Gastrocnemius medialis (tissue), 4 donors: ENCODE measurements at regions of chr2 and their contacts with region 1.

Region 1: DNA sequence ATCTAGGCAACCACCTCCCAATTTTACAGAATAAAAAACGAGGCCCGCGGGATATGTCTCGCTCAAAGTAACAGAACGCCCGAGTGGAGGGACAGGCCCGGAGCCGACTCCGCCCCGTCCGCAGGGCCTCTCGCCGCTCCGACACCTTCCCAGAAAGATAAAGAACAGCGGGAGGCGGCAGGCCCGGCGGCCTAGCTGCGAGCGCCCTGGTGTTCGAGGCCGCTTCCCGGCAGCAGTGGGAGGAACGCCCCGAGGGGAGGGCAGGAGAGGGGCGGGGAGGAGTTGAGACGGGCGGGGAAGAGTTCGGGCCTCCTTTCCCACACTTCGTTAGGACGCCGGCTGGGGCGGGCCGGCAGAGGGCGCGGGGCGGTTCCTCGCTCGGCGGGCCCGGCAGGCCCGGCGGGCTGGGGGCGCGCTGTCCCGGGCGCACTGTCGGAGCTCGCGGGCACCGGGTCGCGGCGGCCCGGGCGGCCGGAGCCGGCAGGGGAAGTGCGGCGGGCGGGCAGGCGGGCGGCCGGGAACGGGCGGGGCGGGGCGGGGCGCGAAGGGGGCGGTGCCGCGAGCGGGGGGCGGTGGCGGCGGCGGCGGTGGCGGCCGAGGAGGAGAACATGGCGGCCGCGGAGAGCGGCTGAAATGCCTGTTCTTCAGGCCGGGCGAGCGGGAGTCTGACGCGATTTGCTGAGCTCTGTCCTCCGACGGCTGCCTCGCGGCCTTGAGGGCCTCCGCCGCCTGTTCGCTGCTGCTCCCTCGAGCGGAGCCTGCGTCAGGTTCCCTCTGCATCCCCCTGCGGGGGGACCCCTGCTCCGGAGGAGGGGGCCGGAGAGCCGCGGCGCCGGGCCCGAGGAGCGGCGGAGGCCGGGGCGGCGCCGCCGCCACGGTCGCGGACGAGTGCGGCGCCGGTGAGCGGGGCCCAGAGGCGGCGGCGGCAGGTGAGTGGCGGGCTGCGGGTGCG is at the start of gene NCOA1:
- DNase-seq: peak; percentile 79 to 81
- ATAC-seq: peak; percentile 78 to 79
- H3K4me3 ChIP-seq: peak within 1 kb of the TSS; percentile 71 to 87 (median 84)
- H3K27ac ChIP-seq: peak within 1 kb of the TSS; percentile 93 to 98 (median 97)
- H3K4me1 ChIP-seq: peaks cover 39 to 41% of the 10 kb centered on the region in 2 donors
- H3K27me3 ChIP-seq: no peaks in the 10 kb centered on the region
- CTCF ChIP-seq: peak; percentile 11 to 37 (median 28)
- POLR2A ChIP-seq: peak; percentile 60 to 68
- total RNA-seq, gene NCOA1: 33.9 to 91.2 (median 60.1) TPM

Region 2: GRCh38 chr2:24435391-24436316 is 55.3 kb before region 1 on chr2:
- in situ Hi-C with region 1: no loop called
- intact Hi-C with region 1: loop called (anchors 1 kb)
- DNase-seq: peak; percentile 91
- ATAC-seq: peak; percentile 91
- H3K4me3 ChIP-seq: peak overlapping the region; percentile 27 to 46 (median 34)
- H3K27ac ChIP-seq: peak overlapping the region; percentile 81 to 92 (median 91)
- H3K4me1 ChIP-seq: peaks cover 54% of the 10 kb centered on the region in 2 donors
- H3K27me3 ChIP-seq: no peaks in the 10 kb centered on the region
- CTCF ChIP-seq: no peak
- POLR2A ChIP-seq: no peak

Region 3: DNA sequence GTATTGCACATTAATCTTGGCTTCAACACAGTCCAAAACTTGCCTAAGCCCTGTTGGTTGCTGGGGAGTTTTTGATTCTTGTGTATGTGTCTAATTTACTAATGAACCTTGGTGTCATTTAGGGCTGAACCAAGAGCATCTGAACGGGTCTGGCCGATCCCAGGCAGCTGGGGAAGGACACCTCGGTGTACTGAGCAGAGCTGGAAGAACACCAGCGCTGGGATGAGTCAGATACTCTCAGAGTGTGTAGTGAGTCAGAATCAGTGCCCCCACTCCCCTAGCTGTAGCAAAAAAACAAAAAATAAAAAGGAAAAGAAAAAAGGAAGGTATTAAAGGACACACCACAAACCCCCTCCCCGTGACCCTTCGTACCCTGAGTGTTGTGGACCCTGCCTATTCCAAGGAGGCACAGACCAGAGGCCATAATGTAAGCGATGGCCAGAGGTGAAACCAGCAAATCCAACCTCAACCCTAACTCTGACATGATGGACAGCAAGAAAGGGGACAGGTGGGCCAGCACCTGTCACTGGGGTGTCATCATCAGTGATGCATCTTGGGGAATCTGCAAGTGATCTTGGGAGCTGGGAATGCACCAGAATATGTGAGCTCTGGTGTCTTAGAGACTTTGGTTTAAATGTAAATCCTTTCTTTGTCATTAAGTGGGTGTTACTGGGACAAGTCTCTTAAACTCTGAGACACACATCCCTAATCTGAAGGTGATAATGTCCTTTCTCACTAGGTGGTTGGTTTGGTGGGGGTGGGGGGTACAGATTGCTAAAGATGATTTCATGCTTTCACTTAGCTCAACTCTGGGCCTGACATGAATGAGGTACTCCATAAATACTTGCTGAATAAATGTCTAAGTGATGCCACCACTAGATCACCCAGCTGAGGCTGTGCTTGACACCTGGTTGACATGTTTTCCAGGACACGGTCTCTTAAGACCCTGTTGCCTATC is 34.1 kb before region 1 on chr2:
- in situ Hi-C with region 1: no loop called
- intact Hi-C with region 1: loop called (anchors 1 kb)
- DNase-seq: peak; percentile 88 to 92
- ATAC-seq: peak; percentile 97 to 98
- H3K4me3 ChIP-seq: no peak overlapping the region
- H3K27ac ChIP-seq: peak overlapping the region; percentile 63 to 88 (median 86)
- H3K4me1 ChIP-seq: peaks cover 28 to 43% of the 10 kb centered on the region in 2 donors
- H3K27me3 ChIP-seq: no peaks in the 10 kb centered on the region
- CTCF ChIP-seq: peak in 1 of 5 experiments; percentile 25
- POLR2A ChIP-seq: no peak

Region 4: DNA sequence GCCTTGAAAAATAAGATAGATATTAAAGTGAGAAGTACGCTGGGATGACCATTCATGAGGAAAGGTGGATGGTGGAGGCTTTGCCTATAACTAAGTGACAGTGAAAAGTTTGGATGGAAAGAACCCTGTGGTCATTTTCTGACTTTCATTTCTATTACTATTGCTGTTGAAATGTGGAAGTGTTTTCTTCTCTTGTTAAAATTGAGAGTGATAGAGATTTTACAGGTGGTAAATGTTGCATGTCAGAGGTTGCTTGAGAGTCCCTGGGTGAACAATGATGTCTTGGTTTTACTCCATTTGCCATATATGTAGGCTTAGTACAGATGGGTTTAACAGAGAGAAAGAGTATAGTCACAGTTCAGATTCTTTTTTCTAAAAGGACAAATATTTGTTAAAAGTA is 18.5 kb after region 1 on chr2:
- in situ Hi-C with region 1: no loop called
- intact Hi-C with region 1: no loop called
- DNase-seq: no peak
- ATAC-seq: no peak
- H3K4me3 ChIP-seq: no peak overlapping the region
- H3K27ac ChIP-seq: no peak overlapping the region
- H3K4me1 ChIP-seq: peaks cover 70 to 80% of the 10 kb centered on the region in 2 donors
- H3K27me3 ChIP-seq: no peaks in the 10 kb centered on the region
- CTCF ChIP-seq: no peak
- POLR2A ChIP-seq: no peak

Region 5: GRCh38 chr2:24658531-24659202 is 167.7 kb after region 1 on chr2:
- in situ Hi-C with region 1: no loop called
- intact Hi-C with region 1: loop called (anchors 2 kb)
- DNase-seq: peak; percentile 86 to 89
- ATAC-seq: peak; percentile 94 to 96
- H3K4me3 ChIP-seq: peak overlapping the region in 3 of 4 donors; percentile 7 to 24 (median 13)
- H3K27ac ChIP-seq: peak overlapping the region; percentile 85 to 89 (median 87)
- H3K4me1 ChIP-seq: peaks cover 31 to 60% of the 10 kb centered on the region in 2 donors
- H3K27me3 ChIP-seq: no peaks in the 10 kb centered on the region
- CTCF ChIP-seq: no peak
- POLR2A ChIP-seq: peak in 1 of 2 donors; percentile 9

Region 6: DNA sequence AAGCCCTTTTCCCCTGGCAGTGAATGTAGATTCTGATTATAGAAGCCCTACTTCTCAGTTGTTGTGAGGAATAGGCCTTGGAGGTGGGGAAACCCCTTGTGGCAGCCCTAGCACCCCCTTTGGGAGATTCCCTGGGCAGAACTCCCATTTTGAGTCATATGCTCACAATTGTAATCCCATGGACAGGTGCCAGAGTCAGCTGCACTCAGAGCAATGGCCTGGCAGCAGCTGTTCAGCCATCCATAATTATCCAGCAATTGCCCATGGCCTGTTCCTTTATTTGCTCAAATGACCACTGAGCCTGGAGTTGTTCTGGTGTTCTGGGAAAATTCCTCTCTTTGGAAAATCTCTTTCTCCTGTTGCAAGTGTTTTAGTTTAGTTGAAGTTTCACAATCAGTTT is 230.5 kb after region 1 on chr2:
- in situ Hi-C with region 1: no loop called
- intact Hi-C with region 1: loop called (anchors 1 kb)
- DNase-seq: peak; percentile 79 to 84
- ATAC-seq: peak; percentile 94 to 95
- H3K4me3 ChIP-seq: no peak overlapping the region
- H3K27ac ChIP-seq: peak overlapping the region; percentile 64 to 79 (median 75)
- H3K4me1 ChIP-seq: peaks cover 36 to 56% of the 10 kb centered on the region in 2 donors
- H3K27me3 ChIP-seq: no peaks in the 10 kb centered on the region
- CTCF ChIP-seq: no peak
- POLR2A ChIP-seq: no peak

Region 7: DNA sequence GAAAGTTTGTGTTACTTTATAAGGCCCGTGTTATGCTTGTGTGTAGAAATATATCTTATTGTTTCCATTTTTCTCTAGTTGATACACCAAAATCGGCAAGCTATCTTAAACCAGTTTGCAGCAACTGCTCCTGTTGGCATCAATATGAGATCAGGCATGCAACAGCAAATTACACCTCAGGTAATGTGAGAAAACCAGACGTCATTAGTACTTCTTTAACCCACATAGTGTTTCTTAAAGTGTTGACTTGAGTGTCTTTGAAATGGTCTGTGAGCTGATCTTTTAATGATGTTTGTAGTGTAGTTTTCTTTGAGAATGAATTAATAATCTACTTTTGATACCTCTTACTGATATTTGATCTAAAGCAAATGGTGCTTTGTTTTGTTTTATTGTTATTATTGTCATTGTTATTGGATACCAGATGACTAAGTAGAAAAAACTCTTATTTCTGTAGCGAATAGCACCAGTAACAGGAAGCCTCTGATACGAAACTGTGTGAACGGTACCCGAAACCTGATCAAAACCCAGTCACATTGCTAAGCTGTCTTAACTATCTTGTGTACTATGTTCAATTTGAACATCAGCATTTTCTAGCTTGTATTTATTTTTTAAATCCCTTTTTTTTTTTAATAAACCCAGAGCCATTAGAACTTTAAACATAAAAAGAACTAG is 248.5 kb after region 1 on chr2:
- in situ Hi-C with region 1: no loop called
- intact Hi-C with region 1: loop called (anchors 5 kb)
- DNase-seq: no peak
- ATAC-seq: peak; percentile 63
- H3K4me3 ChIP-seq: no peak overlapping the region
- H3K27ac ChIP-seq: peak overlapping the region; percentile 30 to 55 (median 38)
- H3K4me1 ChIP-seq: peaks cover 20 to 35% of the 10 kb centered on the region in 2 donors
- H3K27me3 ChIP-seq: no peaks in the 10 kb centered on the region
- CTCF ChIP-seq: no peak
- POLR2A ChIP-seq: no peak

Region 8: DNA sequence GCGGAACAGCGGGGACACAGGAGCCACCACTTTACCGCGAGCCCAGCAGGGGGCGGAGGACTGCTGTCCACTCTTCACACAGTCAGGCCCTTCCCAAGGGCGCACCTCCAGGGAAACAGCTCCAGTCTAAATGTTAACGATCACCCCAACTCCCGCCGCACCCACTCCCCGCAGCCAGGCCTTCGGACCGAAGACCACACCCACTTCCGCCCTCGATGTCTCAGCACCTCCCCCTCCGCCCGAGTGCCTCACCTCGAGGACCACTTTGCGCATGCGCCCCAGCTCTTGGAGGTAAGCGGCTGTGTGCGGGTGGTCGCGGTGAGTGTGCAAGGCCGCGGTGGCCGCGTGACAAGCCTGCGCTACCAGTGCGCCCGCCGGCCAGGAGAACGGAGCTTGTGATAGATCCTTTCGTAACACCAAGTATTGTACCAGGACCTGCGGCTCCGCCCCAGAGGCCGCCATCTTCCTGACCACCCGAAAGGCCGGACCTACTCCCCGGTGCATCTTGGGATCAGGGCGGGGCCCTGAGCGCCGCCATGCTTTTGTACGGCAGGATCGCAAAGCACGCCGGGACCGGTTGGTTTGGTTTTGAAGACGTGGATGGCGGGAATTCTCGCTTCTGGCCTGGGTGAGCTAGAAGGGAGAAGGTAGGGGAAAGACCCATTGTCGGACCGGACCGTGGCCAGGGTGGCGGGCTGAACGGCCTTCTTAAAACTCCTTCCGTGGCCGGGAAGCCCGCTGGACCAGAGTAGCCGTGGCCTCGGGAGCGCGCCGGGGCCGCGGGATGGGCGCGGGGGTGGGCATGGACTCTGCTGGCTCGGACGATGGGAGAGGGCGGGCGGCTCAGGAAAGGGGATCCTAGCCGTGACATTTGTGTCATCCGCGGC is 302.2 kb after region 1 on chr2 and contains the starts of genes CENPO and PTRHD1:
- in situ Hi-C with region 1: no loop called
- intact Hi-C with region 1: loop called (anchors 2 kb)
- DNase-seq: peak; percentile 93 to 95
- ATAC-seq: peak; percentile 97 to 98
- H3K4me3 ChIP-seq: peak within 1 kb of the TSS; percentile 67 to 94 (median 88)
- H3K27ac ChIP-seq: peak within 1 kb of the TSS; percentile 95 to 99 (median 98)
- H3K4me1 ChIP-seq: peaks cover 16 to 17% of the 10 kb centered on the region in 2 donors
- H3K27me3 ChIP-seq: no peaks in the 10 kb centered on the region
- CTCF ChIP-seq: peak; percentile 57 to 72 (median 66)
- POLR2A ChIP-seq: peak; percentile 31 to 36
- total RNA-seq, gene CENPO: 1.2 to 3.6 (median 2.7) TPM
- total RNA-seq, gene PTRHD1: 17.3 to 45.0 (median 37.3) TPM